Activated CD4-positive, alpha-beta memory T cell treated with anti-CD3 and anti-CD28 coated beads, Interleukin-2, amount 10 ng/mL, durations not matched to agents 7 days and 5 days (primary cell): ENCODE measurements at regions of chr19 and their contacts with region 1.

Region 1: GRCh38 chr19:1605236-1606137 is at the start of gene UQCR11:
- DNase-seq: peak; percentile 94
- H3K4me3 Mint-ChIP-seq: peak within 1 kb of the TSS; percentile 96
- H3K27ac Mint-ChIP-seq: peak within 1 kb of the TSS; percentile 99
- H3K4me1 Mint-ChIP-seq: peaks cover 55% of the 10 kb centered on the region
- H3K27me3 Mint-ChIP-seq: no peaks in the 10 kb centered on the region
- total RNA-seq, gene UQCR11: 177 to 191 TPM

Region 2: DNA sequence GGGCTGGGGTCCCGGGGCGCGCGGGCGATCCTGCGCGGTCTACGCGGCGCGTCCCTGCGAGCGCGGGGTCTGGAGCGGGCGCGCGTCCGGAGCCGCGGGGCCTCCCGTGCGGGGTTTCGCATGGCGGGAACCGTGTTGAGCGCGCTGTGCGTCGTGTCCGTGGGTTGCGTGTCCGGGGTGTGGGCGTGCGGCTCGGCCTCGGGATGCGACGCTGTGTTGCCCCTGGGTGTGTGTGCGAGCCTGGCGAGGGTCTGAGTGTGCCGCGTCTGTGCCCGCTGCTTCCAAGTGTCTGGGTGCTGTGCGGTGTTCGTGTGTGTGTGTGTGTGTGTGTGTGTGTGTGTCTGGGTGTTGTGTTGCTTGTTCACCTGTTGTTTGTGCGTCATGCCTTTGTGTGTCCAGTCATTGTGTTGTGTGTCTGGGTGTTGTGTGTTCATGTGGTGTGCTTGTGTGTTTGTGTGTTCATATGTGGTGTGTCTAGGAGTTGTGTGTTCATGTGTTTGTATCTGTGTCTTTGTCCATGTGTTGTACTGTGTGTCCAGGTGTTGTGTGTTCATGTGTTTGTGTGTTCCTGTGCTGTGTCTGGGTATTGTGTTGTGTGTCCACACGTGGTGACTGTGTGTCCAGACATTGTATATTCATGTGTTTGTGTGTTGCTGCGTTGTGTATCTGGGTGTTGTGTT is 81.1 kb before region 1 on chr19:
- CTCF ChIA-PET with region 1: no interaction called
- POLR2A ChIA-PET with region 1: no interaction called
- DNase-seq: no peak
- H3K4me3 Mint-ChIP-seq: no peak overlapping the region
- H3K27ac Mint-ChIP-seq: no peak overlapping the region
- H3K4me1 Mint-ChIP-seq: peaks cover 4% of the 10 kb centered on the region
- H3K27me3 Mint-ChIP-seq: peaks cover 27% of the 10 kb centered on the region

Region 3: GRCh38 chr19:1538978-1539377 is 66.5 kb before region 1 on chr19:
- CTCF ChIA-PET with region 1: no interaction called
- POLR2A ChIA-PET with region 1: no interaction called
- DNase-seq: no peak
- H3K4me3 Mint-ChIP-seq: no peak overlapping the region
- H3K27ac Mint-ChIP-seq: no peak overlapping the region
- H3K4me1 Mint-ChIP-seq: no peaks in the 10 kb centered on the region
- H3K27me3 Mint-ChIP-seq: peaks cover 13% of the 10 kb centered on the region

Region 4: DNA sequence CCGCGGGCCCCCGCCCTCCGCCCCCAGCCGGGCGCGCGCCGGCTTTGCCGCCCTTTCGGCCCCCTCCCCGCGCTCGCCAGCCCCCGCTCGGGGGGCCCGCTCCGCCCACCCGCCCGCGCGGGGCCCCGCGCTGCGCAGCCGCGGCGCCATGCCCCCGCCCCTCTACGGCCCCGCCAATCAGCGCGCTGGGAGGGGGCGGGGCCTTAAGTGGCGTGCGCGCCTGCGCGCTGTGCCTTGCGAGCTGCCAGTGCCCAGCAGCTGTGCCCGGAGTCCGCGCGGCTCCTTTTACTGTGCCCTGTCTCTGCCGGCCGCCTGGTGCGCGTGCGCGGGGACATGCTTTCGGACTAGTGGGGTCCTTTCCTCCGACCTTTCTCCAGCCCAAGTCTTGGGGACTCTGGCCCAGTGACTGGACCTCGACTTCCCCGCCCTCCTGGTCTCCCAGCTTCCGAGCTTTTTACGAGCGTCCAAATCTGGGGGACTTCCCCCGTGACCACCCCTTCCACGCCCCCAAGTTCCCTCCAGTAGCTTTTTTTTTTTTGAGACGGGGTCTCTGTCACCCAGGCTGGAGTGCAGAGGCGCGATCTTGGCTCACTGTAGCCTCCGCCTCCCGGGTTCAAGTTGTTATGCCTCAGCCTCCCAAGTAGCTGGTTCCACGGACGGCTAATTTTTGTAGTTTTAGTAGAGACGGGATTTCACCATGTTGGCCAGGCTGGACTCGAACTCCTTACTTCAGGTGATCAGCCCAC is 12.6 kb before region 1 on chr19 and contains the start of gene MBD3:
- CTCF ChIA-PET with region 1: interaction called, 7 read pairs
- POLR2A ChIA-PET with region 1: interaction called, 60 read pairs
- DNase-seq: peak; percentile 89
- H3K4me3 Mint-ChIP-seq: peak within 1 kb of the TSS; percentile 85
- H3K27ac Mint-ChIP-seq: peak within 1 kb of the TSS; percentile 83
- H3K4me1 Mint-ChIP-seq: peaks cover 19% of the 10 kb centered on the region
- H3K27me3 Mint-ChIP-seq: no peaks in the 10 kb centered on the region
- total RNA-seq, gene MBD3: 63.6 to 66.8 TPM

Region 5: DNA sequence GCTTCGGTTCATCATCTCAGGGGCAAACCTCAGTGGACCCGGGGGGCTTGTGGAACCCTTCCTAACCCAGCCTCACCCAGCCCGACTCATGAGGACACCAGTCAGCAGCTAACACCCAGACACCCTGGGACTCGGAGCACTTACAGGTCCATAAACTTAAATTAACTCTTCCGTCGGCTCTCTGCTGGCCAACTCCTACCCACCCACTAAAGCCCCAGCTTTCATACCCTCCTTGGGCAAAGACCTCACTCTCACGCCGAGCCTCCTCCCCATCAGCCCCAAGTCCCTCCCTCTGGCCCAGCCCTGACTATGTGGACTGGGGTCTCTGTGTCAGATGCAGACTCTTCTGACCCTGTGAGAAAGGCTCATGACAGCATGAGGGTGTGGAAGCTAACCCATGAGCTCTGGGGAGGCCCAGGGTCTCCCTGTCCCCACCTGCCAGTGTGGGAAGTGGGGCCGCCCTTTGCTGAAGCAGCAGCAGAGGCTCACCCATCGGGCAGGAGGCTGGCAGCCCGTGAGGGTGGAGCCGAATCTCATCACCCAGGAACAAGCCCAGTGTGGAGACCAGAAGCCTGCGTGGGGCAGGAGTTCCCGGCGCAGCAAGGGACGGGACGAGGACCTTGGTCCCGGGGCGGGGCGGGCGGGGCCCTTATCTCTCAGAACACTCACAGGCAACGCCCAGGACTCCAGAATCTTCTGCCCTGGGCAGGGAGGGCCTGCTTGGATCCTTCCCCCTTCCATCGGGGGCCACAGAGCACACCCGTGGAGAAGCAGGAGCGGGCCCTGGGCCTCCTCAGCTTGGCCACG is 27.2 kb after region 1 on chr19:
- CTCF ChIA-PET with region 1: no interaction called
- POLR2A ChIA-PET with region 1: no interaction called
- DNase-seq: no peak
- H3K4me3 Mint-ChIP-seq: no peak overlapping the region
- H3K27ac Mint-ChIP-seq: no peak overlapping the region
- H3K4me1 Mint-ChIP-seq: no peaks in the 10 kb centered on the region
- H3K27me3 Mint-ChIP-seq: no peaks in the 10 kb centered on the region

Region 6: GRCh38 chr19:1652471-1653299 is 47.2 kb after region 1 on chr19 and contains the start of gene TCF3:
- CTCF ChIA-PET with region 1: interaction called, 4 read pairs
- POLR2A ChIA-PET with region 1: interaction called, 39 read pairs
- DNase-seq: peak; percentile 99
- H3K4me3 Mint-ChIP-seq: peak within 1 kb of the TSS; percentile 81
- H3K27ac Mint-ChIP-seq: peak within 1 kb of the TSS; percentile 84
- H3K4me1 Mint-ChIP-seq: peaks cover 23% of the 10 kb centered on the region
- H3K27me3 Mint-ChIP-seq: no peaks in the 10 kb centered on the region
- total RNA-seq, gene TCF3: 67.3 to 71.2 TPM

Region 7: DNA sequence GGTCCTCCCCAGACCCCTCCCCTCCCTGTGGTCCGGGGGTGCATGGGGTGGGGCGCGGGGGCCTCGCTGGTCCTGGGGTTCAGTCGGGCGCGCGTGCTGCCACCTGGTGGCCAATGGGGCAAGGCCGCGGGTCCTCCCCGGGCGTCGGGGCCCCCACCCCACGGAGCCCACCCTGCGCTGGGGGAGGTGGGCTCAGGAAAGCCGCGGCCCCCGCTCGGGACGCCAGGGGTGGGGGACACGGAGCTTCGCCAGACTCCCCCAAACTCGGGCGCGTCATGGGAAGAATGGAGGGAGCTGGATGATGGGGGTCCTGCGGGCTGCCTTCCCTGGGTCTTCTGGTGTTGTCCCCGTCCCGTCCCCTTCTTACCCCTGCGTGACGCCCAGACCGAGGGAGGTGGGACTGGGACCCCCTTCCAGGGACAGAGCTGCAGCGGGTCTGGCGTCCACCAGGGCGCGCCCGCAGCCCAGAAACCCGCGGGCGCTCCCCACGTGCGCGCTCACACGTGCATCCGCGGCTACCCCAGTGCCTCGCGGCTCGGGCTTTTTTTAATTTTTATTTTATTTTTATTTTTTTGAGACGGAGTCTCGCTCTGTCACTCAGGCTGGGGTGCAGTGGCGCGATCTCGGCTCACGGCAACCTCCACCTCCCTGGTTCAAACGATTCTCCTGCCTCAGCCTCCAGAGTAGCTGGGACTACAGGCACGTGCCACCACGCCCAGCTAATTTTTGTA is 66.7 kb after region 1 on chr19:
- CTCF ChIA-PET with region 1: interaction called, 14 read pairs
- POLR2A ChIA-PET with region 1: interaction called, 8 read pairs
- DNase-seq: peak; percentile 53
- H3K4me3 Mint-ChIP-seq: no peak overlapping the region
- H3K27ac Mint-ChIP-seq: no peak overlapping the region
- H3K4me1 Mint-ChIP-seq: peaks cover 7% of the 10 kb centered on the region
- H3K27me3 Mint-ChIP-seq: peaks cover 50% of the 10 kb centered on the region